ENCODE measurements at regions of chr20 and their contacts with region 1.

Region 1: DNA sequence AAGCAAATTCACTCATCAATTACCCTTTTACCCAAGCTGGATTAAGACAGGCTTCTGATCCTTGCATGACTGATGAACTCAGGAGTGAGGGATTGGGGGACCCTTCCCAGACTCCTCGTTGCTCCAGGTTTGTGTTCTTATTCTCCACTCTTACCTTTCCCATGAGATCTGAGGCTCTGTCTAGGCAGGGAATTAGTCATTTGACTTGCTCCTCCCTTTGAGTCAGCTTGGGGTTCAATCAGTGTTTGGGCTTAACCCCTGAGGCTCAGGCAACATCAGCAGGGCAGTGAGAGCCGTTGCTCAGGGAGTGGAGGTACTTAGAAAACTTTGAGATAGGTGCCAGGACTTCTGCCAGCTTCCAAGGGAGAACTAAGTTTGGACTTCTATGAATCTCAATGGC is 20.7 kb upstream of the TOX2 start:
- DNase-seq: no peak
- H3K4me3 ChIP-seq: no peak overlapping the region
- H3K27ac ChIP-seq: no peak overlapping the region
- H3K4me1 ChIP-seq: no peaks in the 10 kb centered on the region
- H3K27me3 ChIP-seq: no peaks in the 10 kb centered on the region
- CTCF ChIP-seq: no peak
- POLR2A ChIP-seq: no peak

Region 2: DNA sequence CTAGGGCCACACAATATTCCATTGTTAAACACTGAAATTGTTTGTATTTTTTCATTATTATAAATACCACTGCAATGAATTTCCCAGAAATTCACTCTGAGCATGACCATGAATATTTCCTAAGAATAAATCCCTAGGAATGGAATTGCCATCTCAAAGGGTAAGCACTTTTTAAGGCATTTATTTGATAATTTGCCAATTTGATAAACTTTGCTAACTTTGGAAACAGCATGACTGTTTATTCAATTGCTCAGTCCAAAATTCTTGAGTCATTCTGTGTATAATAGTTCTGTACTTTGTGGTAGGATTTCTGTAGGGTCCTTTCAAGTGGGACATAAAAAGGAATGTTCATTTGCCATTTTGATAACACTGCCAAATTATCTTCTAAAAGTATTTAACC is 23.4 kb before region 1 on chr20:
- intact Hi-C with region 1: loop called (anchors 1 kb)
- DNase-seq: no peak
- H3K4me3 ChIP-seq: no peak overlapping the region
- H3K27ac ChIP-seq: no peak overlapping the region
- H3K4me1 ChIP-seq: no peaks in the 10 kb centered on the region
- H3K27me3 ChIP-seq: no peaks in the 10 kb centered on the region
- CTCF ChIP-seq: no peak
- POLR2A ChIP-seq: no peak

Region 3: DNA sequence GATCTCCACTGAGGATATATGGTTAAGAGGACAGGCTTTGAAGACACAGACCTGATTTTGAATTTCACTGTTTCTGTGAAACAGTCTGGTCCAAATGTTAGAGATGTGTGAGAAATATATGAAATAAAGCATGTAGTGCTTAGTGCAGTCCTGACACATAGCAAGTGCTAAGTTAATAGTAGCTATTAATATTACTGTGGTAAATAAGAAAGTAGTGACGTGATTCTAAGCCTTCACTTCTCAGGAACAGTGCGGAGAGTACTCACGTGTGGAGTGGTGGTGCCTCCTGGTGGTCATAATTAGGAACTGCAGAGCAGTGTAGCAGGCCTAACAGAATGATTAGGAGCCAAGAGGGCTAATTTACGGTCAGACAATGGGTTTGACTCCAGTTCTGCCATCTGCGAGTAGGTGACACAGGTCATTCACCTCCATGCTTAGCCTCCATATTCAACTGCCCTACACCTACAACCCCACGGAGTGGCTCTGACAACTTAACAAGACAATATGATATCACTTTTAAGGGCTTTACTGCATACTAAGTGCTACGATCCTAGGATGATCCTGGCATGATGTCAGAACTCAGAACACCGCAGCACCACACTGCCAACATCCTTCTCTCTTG is 186.8 kb after region 1 on chr20:
- intact Hi-C with region 1: no loop called
- DNase-seq: peak; percentile 57 to 72
- H3K4me3 ChIP-seq: no peak overlapping the region
- H3K27ac ChIP-seq: no peak overlapping the region
- H3K4me1 ChIP-seq: no peaks in the 10 kb centered on the region
- H3K27me3 ChIP-seq: no peaks in the 10 kb centered on the region
- CTCF ChIP-seq: peak; percentile 93 to 96 (median 95)
- POLR2A ChIP-seq: no peak